AG04449 (cell line): ENCODE measurements at regions of chr6 and their contacts with region 1.

Region 1: DNA sequence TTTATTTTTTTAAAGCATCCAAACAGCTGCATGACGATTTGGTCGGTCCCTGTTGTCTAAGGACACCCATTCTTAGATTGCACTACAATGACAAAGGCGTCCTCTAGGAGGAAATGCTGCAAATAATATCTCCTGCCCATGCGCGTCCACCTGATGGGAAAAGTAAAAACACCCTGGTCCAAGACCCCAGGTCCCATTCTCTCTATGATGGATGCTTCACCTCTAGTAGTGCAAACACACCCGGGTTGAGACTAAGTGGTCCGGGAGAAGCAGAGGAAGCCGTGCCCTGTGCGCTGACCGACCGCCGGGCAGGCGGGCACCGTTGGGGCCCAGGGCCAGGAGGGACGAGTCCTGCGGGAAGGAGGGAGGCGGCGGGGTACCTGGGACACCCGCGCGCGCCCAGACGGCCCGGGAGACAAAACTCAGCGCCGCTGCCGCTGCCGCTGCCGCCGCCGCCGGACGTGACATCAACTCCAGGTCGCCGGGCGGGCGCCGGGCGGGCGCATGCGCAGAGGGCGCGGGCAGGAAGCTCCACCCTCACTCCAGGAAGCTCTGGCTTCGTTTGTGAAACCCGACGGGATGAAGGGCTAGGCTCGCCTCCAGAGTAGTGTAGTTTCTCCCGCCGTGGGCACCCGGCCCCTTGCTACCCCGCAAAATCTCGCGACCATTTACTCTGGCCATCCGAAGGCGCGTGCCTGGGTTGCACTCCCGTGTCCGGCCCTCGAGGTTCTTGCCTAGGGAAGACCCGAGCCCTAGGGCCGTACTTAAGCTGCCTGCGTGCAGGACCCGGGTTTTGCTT is at the start of gene TBC1D7:
- DNase-seq: peak; percentile 19
- H3K4me3 ChIP-seq: peak within 1 kb of the TSS; percentile 88
- CTCF ChIP-seq: no peak

Region 2: DNA sequence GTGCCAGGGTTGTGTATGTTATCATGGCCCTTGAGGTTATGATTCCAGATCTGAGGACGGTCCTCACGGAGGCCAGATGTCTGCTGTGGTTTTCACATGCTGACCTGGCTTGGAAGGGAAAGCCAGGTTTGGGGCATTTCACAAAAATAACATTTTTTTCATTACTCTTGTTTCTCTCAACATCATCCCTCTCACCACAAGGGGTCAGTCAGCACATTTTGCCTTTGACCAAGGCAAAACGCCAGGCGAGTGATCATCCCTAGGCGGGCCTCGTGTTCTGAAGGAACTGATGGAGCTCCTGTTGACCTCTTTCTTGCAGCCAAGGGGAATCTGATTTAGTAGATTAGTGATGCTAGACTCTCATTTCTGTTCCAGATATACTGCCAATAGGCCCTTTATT is 133.4 kb before region 1 on chr6:
- CTCF ChIA-PET with region 1: interaction called, 62 read pairs
- POLR2A ChIA-PET with region 1: no interaction called
- DNase-seq: peak; percentile 4
- H3K4me3 ChIP-seq: no peak overlapping the region
- CTCF ChIP-seq: peak; percentile 58

Region 3: DNA sequence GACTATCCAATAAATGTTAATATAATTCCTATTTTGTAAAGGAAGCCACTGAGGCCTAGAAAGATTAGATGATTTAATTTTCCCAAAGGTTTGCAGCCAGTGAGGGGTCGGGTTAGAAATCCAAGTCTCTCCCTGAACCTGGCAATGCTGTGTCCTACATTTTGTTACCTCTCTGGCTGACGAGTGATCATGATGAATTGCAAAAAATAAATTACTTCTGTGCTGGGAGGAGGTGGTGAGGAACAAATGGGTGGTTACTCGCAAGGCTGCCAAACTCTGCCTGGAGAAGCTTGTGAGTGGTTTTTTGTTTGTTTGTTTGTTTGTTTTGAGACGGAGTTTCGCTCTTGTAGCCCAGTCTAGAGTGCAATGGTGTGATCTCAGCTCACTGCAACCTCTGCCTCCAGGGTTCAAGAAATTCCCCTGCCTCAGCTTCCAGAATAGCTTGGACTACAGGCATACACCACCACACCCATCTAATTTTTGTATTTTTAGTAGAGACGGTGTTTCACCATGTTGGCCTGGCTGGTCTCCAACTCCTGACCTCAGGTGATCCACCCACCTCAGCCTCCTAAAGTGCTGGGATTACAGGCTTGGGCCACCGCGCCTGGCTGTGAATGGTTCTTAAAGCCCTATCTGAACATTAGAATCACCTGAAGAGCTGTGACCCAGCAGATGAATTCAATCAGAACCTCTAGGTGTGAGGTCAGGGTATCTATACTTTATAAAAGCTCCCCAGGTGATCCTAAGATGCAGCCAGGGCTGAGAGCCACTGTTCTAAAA is 20.2 kb after region 1 on chr6:
- CTCF ChIA-PET with region 1: interaction called, 20 read pairs
- POLR2A ChIA-PET with region 1: no interaction called
- DNase-seq: no peak
- H3K4me3 ChIP-seq: no peak overlapping the region
- CTCF ChIP-seq: no peak

Region 4: GRCh38 chr6:13538084-13538483 is 209.8 kb after region 1 on chr6:
- CTCF ChIA-PET with region 1: interaction called, 141 read pairs
- POLR2A ChIA-PET with region 1: no interaction called
- DNase-seq: no peak
- H3K4me3 ChIP-seq: no peak overlapping the region
- CTCF ChIP-seq: peak; percentile 5